Breast epithelium (tissue), 4 donors: ENCODE measurements at regions of chr1 and their contacts with region 1.

Region 1: DNA sequence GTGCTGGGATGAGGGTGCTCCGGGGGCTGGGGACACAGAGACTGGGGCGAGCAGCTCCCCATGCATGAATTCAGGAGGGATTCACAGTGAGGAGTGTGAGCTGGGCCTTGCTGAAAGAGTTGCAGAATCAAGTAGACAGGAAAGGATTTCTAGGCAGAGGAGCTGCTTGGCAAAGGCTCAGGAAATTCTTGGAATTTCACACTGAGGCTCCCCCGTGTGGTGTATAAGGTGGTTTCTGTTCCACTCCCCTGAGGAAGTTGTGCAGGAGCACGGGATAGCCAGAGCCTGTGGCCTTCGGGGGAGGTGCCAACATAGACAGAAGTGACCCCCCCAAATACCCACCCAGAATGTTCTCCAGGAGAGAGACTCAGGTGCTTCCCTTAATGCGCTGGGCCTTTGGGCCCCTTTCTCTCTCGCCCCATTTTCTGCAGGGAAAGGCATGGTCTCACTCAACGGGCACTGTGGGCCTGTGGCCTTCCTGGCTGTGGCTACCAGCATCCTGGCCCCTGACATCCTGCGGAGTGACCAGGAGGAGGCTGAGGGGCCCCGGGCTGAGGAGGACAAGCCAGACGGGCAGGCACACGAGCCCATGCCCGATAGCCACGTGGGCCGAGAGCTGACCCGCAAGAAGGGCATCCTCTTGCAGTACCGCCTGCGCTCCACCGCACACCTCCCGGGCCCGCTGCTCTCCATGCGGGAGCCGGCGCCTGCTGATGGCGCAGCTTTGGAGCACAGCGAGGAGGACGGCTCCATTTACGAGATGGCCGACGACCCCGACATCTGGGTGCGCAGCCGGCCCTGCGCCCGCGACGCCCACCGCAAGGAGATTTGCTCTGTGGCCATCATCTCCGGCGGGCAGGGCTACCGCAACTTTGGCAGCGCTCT is 58.5 kb upstream of the ACTL8 start:
- DNase-seq: peak in 1 of 2 donors; percentile 29
- H3K4me3 ChIP-seq: no peak overlapping the region
- H3K27ac ChIP-seq: no peak overlapping the region
- H3K4me1 ChIP-seq: no peaks in the 10 kb centered on the region
- H3K27me3 ChIP-seq: no peaks in the 10 kb centered on the region
- CTCF ChIP-seq: peak in 2 of 3 donors; percentile 32 to 54
- POLR2A ChIP-seq: no peak

Region 2: DNA sequence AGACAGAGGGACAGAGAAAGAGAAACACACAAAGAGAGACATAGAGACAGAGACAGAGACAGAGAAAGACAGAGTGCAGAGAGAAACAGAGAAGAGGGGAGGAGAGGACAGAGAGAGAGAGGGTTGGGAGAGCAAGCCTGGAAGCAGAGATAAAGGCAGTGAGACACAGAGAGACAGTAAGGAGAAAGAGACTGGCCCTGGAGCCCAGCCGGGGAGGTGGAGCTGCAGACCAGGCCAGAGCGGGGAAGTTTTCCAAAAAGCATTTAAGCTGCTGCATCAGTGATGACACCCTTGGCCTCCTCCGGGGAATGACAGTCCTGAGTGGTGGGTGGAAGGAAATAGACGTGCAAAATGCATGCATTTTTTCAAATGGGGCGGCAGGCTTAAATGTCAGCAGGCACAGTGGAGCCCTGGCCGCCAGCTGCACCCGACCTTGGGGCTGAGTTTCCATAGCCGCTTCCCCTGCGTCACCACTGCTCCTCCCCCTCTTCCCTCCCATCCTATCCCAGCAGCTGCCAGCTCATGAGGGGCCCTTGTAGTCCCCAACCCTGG is 688.7 kb after region 1 on chr1:
- intact Hi-C with region 1: no loop called
- DNase-seq: no peak
- H3K4me3 ChIP-seq: no peak overlapping the region
- H3K27ac ChIP-seq: no peak overlapping the region
- H3K4me1 ChIP-seq: no peaks in the 10 kb centered on the region
- H3K27me3 ChIP-seq: peaks cover 0 to 3% of the 10 kb centered on the region in 2 donors
- CTCF ChIP-seq: no peak
- POLR2A ChIP-seq: no peak

Region 3: DNA sequence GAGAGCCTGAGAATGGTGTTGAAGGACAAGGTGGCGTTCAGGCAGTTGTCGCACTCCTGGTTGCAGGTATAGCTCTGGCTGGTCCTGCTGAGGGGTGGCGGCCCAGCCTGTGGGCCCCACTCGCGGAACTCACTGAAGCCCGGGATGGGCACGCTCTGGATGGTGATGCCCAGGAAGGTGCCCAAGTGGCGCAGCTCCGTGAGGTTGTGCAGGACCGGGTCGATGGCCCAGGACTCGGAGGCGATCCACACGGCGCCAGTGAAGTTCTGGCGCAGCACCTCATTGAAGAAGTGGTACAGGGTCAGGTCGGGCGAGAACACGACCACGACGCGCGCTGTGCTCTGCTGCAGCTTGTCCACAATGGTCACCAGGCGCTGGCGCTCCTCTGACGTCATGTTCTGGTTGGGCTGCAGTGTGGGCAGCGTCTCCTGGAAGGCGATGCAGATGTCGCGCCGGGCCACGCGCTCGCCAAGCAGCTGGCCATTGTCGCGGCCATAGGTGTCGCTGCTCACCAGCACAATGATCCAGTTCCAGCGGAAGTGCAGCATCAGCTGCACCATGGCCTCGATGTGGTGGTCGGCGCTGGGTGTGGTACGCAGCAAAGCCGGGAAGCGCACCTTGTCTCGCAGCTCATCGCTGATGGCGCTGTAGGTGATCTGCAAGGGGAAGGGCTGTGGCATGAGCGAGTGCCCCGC is 1157.8 kb after region 1 on chr1:
- intact Hi-C with region 1: loop called (anchors 10 kb)
- DNase-seq: no peak
- H3K4me3 ChIP-seq: no peak overlapping the region
- H3K27ac ChIP-seq: no peak overlapping the region
- H3K4me1 ChIP-seq: no peaks in the 10 kb centered on the region
- H3K27me3 ChIP-seq: peaks cover 0 to 5% of the 10 kb centered on the region in 2 donors
- CTCF ChIP-seq: no peak
- POLR2A ChIP-seq: no peak

Region 4: GRCh38 chr1:19139711-19140110 is 1443.1 kb after region 1 on chr1:
- intact Hi-C with region 1: no loop called
- DNase-seq: no peak
- H3K4me3 ChIP-seq: no peak overlapping the region
- H3K27ac ChIP-seq: no peak overlapping the region
- H3K4me1 ChIP-seq: no peaks in the 10 kb centered on the region
- H3K27me3 ChIP-seq: no peaks in the 10 kb centered on the region
- CTCF ChIP-seq: no peak
- POLR2A ChIP-seq: no peak